OCI-LY7 (cell line): ENCODE measurements at regions of chr19 and their contacts with region 1.

Region 1: DNA sequence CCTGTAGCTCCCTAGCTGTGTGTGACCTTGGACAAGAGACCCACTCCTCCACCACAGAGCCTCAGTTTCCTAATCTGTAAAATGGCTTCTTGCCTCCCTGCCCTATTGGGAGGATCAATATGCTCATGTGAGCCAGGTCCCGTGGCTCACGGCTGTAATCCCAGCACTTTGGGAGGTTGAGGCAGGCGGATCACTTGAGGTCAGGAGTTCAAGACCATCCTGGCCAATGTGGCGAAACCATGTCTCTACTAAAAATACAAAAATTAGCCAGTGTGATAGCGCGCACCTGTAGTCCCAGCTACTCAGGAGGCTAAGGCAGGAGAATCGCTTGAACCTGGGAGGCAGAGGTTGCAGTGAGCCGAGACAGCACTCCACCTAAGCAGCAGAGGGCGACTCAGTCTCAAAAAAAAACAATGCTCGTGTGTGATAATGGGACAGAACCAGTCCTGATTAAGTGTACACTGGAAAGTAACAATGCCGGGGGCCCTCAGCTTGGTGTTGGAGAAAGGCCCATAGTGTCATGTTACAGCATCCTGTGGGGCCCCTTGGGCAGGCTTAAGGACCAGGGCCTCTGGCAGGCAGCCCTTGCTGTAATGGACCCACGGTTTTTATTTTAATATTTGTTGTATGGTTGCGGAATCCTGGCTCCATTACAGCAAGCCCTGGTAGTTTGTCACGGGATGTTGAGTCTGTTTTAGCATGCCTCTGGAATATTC is 6.8 kb downstream of the RPS11 start:
- DNase-seq: peak; percentile 74
- H3K4me3 ChIP-seq: no peak overlapping the region
- H3K27ac ChIP-seq: no peak overlapping the region
- H3K4me1 ChIP-seq: peaks cover 36% of the 10 kb centered on the region
- CTCF ChIP-seq: peak; percentile 80

Region 2: DNA sequence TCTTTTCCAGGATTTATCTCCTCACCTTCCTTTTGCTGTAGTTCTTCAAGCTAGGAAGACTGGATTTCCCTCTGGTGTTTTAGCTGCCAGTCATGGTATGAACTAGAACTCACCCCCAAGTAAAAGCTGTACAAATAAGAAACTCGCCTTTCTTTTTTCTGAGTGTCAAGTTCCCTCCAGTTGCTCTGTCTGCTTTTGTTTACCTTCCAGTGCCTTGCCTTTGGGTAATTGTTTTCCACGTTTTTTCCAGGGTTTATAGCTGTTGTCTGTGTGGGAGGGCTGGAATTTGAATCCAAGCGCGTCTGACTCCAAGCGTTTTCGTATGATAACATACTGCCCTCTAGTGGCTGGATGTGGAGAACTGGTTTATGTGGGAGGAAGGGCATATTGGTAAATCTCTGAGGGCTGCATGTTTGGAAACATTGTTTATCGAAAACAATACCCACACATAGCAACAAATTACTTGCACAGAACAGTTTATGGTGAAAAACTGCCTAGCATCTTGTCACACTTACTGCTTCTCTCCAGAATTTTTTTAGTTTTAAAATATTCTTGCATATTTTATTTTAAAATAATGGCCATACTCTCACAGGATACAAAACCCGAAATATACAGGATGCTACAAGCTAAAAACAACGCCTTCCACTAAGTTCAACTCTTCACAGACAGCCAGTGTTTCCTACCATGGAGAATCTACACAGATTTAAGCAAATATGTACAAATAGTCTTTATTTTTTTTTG is 44.0 kb after region 1 on chr19:
- CTCF ChIA-PET with region 1: no interaction called
- POLR2A ChIA-PET with region 1: interaction called, 5 read pairs
- intact Hi-C with region 1: loop called (anchors 1 kb)
- DNase-seq: peak; percentile 84
- H3K4me3 ChIP-seq: no peak overlapping the region
- H3K27ac ChIP-seq: no peak overlapping the region
- H3K4me1 ChIP-seq: peaks cover 5% of the 10 kb centered on the region
- CTCF ChIP-seq: peak; percentile 99

Region 3: DNA sequence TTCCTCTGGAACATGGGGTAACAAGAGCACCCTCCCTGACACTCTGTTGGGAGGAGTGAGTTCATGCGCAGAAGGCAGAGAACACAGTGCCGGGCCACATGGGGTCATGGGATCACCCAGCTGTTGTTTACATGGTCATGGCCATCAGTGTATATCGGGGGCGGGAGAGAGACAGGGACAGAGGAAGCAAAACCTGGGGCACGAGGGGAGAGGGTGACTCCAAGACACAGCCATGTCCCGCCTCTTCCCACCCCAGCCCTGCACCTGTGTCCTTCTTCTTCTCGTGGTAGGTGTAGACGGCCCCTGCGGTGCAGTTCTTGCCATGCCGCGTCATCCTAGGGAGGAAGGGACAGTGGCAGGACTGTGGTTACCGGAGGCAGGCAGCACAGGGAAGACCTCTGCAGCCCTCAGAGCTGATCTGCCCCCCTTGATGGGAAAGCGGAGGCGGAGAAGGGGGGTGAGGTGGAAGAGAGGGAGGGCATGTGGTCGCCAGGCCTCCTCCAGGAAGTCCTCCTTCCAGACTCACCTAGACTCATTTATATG is 57.4 kb after region 1 on chr19:
- CTCF ChIA-PET with region 1: no interaction called
- POLR2A ChIA-PET with region 1: no interaction called
- intact Hi-C with region 1: loop called (anchors 5 kb)
- DNase-seq: no peak
- H3K4me3 ChIP-seq: no peak overlapping the region
- H3K27ac ChIP-seq: no peak overlapping the region
- H3K4me1 ChIP-seq: peaks cover 5% of the 10 kb centered on the region
- CTCF ChIP-seq: no peak

Region 4: DNA sequence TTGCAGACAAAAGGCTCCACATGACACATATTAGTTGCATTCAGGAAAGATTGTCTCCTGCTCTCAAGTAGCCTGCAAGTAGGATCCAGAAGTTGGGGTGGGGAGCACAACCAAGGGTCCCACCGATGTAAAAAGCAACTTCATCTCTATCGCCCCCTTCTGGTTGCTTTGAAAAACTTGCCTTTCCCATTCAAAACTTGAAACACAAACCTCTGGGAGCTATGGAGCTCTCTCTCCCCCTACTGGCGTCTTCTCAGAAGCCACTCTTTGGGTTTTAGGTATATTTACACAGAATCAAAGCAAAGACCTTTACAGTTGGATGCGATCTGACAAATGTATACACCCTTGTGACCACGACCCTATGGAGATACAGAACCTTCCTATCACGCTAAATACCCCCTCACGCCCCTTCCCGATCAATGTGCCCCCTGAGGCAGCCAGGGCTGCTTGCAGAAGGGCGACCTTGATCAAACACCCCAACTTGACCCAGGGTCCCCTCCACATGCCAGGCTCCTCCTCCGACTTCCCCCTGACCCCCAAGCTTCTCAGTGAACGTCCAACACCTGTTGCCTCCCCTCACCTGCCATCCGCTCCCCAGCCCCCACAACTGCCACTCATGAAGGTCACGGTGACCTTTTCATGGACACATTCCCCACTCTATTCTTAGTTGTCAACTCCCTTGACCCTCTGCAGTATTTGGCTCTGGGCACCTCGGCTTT is 67.3 kb after region 1 on chr19:
- CTCF ChIA-PET with region 1: no interaction called
- POLR2A ChIA-PET with region 1: no interaction called
- intact Hi-C with region 1: loop called (anchors 1 kb)
- DNase-seq: peak; percentile 92
- H3K4me3 ChIP-seq: peak overlapping the region; percentile 12
- H3K27ac ChIP-seq: peak overlapping the region; percentile 45
- H3K4me1 ChIP-seq: peaks cover 22% of the 10 kb centered on the region
- CTCF ChIP-seq: peak; percentile 99